ENCODE measurements at regions of chr20 and their contacts with region 1.

Region 1: GRCh38 chr20:3312940-3313682 is 74.1 kb upstream of the SLC4A11 start:
- DNase-seq: peak; percentile 54 to 93
- H3K4me3 ChIP-seq: no peak overlapping the region
- H3K27ac ChIP-seq: peak overlapping the region; percentile 83
- H3K4me1 ChIP-seq: peaks cover 49% of the 10 kb centered on the region
- H3K27me3 ChIP-seq: no peaks in the 10 kb centered on the region
- CTCF ChIP-seq: no peak

Region 2: DNA sequence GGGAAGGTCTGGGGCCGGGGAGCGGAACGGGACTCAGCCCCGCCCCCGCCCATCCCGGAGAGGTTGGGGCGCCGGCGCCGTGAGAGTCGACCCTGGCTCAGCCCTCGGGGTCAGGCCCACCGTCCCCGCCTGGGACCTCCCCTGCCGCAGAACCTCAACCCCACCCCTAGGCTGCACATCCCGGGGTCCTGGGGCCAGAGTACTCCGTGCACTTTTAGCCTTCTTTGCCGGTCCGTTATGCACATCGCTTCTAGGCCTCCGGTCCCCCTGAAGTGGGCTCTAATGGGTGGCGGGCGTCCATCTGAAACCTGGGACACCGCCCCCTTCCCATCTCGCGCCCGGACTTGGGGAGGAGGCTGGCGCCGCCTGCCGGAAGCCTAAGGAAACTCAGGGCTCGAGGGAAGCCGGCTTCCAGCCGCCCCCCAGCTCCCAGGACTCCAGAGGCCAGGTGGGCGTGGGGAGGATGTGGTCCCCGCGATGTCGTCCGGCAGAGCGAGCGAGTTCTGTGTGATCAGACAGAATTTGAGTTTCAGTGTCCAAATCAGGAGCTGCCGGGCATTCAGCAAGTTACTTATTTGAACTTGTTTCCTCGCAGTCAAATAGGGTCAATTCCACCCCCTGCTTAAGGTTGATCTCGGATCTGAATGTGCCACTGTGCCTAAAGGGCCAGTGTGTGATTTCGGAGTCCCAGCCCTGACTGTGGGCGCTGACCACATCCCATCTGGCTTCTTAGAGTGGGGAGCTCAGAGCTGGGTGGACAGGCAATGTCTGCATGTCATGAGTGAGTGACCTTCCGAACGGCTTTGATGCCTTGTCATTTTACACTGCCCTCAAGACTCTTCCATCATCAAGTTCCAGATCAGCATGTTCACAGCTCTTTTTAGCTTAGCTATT is 560.3 kb before region 1 on chr20:
- CTCF ChIA-PET with region 1: no interaction called
- POLR2A ChIA-PET with region 1: no interaction called
- intact Hi-C with region 1: loop called (anchors 10 kb)
- DNase-seq: peak in 1 of 2 experiments; percentile 42
- H3K4me3 ChIP-seq: peak overlapping the region; percentile 51; the same call in 1 of the 2 replicates
- H3K27ac ChIP-seq: no peak overlapping the region
- H3K4me1 ChIP-seq: peaks cover 7% of the 10 kb centered on the region
- H3K27me3 ChIP-seq: peaks cover 43% of the 10 kb centered on the region
- CTCF ChIP-seq: peak; percentile 82

Region 3: DNA sequence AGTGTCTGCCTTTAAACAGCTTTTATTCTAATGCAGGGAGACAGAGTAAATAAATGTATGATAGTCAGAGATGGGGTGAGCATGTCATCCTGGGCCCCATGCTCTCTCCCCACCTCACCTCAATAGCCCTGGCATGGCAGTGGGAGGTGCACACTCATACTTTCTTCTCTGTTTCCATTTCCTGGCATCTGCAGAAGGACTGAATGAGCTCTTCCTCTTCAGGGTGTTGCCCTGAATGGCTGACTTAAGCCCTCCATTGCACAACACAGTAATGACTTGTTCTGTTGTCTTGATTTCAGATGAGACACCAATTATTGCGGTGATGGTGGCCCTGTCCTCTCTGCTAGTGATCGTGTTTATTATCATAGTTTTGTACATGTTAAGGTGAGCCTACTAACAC is 326.6 kb before region 1 on chr20:
- CTCF ChIA-PET with region 1: interaction called, 13 read pairs
- POLR2A ChIA-PET with region 1: no interaction called
- intact Hi-C with region 1: no loop called
- DNase-seq: no peak
- H3K4me3 ChIP-seq: no peak overlapping the region
- H3K27ac ChIP-seq: no peak overlapping the region
- H3K4me1 ChIP-seq: no peaks in the 10 kb centered on the region; the same call in 1 of the 2 replicates
- H3K27me3 ChIP-seq: no peaks in the 10 kb centered on the region
- CTCF ChIP-seq: no peak

Region 4: GRCh38 chr20:3094848-3095629 is 218.1 kb before region 1 on chr20:
- CTCF ChIA-PET with region 1: interaction called, 12 read pairs
- POLR2A ChIA-PET with region 1: no interaction called
- intact Hi-C with region 1: no loop called
- DNase-seq: no peak
- H3K4me3 ChIP-seq: no peak overlapping the region
- H3K27ac ChIP-seq: no peak overlapping the region
- H3K4me1 ChIP-seq: no peaks in the 10 kb centered on the region
- H3K27me3 ChIP-seq: peaks cover 4% of the 10 kb centered on the region; the same call in 1 of the 2 replicates
- CTCF ChIP-seq: no peak

Region 5: GRCh38 chr20:3173610-3174441 is 139.3 kb before region 1 on chr20:
- CTCF ChIA-PET with region 1: interaction called, 10 read pairs
- POLR2A ChIA-PET with region 1: no interaction called
- intact Hi-C with region 1: no loop called
- DNase-seq: peak; percentile 46 to 88
- H3K4me3 ChIP-seq: peak overlapping the region; percentile 99
- H3K27ac ChIP-seq: no peak overlapping the region
- H3K4me1 ChIP-seq: peaks cover 13% of the 10 kb centered on the region
- H3K27me3 ChIP-seq: no peaks in the 10 kb centered on the region
- CTCF ChIP-seq: no peak

Measured in PC-9 (cell line).